Right ventricle myocardium inferior (tissue), 1 donor: ENCODE measurements at regions of chr2 and their contacts with region 1.

Region 1: DNA sequence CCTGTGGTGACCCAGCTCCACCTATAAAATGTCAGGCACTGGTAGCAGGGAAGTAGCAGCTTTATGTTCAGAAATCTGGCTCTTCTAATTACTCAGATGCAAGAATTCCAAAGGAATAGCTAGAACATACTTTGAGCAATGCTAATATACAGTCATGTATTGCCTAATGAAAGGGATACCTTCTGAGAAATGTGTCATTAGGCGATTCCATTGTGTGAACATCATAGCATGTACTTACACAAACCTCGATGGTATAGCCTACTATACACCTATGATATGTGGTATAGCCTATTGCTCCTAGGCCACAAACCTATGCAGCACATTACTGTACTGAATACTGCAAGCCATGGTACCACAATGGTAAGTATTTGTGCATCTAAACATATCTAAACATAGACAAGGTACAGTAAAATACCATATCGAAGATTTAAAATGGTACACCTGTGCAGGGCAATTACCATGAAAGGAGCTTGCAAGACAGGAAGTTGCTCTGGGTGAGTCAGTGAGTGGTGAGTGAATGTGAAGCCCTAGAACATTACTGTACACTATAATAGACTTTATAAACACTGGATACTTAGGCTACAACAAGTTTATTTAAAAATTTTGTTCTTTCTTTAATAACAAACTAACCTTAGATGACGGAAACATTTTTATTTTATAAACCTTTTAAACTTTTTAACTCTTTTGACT is 50.3 kb upstream of the ETAA1 start:
- DNase-seq: no peak
- ATAC-seq: no peak

Region 2: GRCh38 chr2:67437174-67437573 is 90.3 kb after region 1 on chr2:
- intact Hi-C with region 1: no loop called
- DNase-seq: no peak
- ATAC-seq: no peak

Region 3: GRCh38 chr2:67462741-67463496 is 116.1 kb after region 1 on chr2:
- intact Hi-C with region 1: no loop called
- DNase-seq: no peak
- ATAC-seq: no peak

Region 4: DNA sequence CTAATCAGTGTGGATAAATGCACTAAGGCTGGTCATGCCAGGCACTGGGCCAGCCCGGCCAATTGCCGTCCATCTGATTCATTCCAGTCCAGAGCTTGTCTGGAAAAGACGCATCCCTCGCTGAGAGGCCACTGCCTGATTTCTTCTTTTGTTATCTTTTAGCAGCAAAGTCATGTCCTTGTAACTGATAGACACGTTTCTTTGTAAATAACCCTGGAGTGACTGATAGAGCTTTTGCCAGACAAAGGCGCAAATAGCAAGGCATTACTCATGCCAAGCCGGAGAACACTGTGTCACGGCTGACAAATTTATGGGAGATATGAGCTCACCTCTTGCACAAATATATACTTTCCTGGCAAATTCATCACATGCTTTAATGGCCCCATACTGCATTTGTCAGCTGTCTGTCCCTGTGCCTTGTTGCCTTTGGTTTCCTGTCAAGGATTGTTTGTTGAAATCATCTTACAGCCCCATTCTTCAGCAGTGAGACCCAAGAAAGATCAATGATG is 214.6 kb after region 1 on chr2:
- intact Hi-C with region 1: loop called (anchors 10 kb)
- DNase-seq: peak; percentile 66
- ATAC-seq: peak; percentile 86

Region 5: DNA sequence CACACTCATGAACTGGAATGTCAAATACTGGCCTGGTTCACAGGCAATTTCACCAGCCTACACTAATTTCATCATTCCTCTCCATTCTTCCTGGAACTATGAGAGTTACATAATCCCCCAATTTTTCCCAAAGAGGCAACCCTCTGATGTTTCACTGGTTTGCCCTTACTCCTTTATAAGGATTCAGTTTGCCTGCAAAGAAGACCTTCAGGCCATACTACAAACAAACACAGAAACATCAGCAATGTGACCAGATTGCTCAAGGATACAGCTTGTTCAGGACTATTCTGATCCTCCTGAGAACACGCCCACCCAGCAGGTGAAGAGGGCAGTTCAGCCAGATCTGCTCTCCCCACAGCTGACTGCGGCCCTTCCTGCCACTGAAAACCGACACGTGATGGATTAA is 265.7 kb after region 1 on chr2:
- intact Hi-C with region 1: no loop called
- DNase-seq: no peak
- ATAC-seq: peak; percentile 23